H1 (cell line): ENCODE measurements at regions of chr1 and their contacts with region 1.

Region 1: GRCh38 chr1:62286786-62287224 is 32.4 kb downstream of the KANK4 start:
- DNase-seq: peak; percentile 36 to 69
- H3K4me3 ChIP-seq: peak overlapping the region in 3 of 4 experiments; percentile 14 to 40 (median 27); a peak in 6 of 8 replicates
- H3K27ac ChIP-seq: no peak overlapping the region
- H3K4me1 ChIP-seq: peaks cover 10 to 20% (median 15%) of the 10 kb centered on the region in 4 experiments
- H3K27me3 ChIP-seq: peaks cover 12 to 60% (median 45%) of the 10 kb centered on the region in 4 experiments
- CTCF ChIP-seq: no peak
- EP300 ChIP-seq: no peak
- POLR2A ChIP-seq: no peak
- RAD21 ChIP-seq: peak in 1 of 2 experiments; percentile 17; a peak in 1 of 4 replicates

Region 2: DNA sequence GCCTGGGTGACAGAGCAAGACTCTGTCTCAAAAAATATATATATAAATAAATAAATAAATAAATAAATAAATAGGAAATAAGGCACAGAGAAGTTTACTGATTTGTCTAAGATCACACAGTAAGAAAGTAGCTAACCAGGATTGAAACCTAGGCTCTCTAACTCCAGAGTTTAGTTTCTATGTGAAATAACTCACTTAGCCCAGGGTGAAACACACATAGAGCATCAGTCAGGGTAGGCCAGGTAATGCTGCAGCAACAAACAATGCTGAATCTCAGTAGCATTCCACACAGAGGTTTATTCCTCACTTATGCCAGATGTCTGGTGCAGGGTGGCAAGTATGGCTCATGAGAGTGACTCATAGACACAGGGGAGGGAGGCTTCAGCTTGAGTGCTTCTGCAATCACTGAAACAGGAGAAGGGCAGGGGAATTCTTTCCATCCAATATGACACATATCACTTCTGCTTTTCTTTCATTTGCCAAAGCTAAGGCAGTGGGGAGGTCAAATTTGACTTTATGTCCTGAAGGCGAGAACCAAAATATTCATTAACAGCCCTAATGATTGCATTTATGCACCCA is 69.5 kb after region 1 on chr1:
- CTCF ChIA-PET with region 1: no interaction called
- POLR2A ChIA-PET with region 1: no interaction called
- DNase-seq: no peak
- H3K4me3 ChIP-seq: no peak overlapping the region
- H3K27ac ChIP-seq: no peak overlapping the region
- H3K4me1 ChIP-seq: no peaks in the 10 kb centered on the region
- H3K27me3 ChIP-seq: no peaks in the 10 kb centered on the region
- CTCF ChIP-seq: no peak
- EP300 ChIP-seq: no peak
- POLR2A ChIP-seq: no peak
- RAD21 ChIP-seq: no peak

Region 3: DNA sequence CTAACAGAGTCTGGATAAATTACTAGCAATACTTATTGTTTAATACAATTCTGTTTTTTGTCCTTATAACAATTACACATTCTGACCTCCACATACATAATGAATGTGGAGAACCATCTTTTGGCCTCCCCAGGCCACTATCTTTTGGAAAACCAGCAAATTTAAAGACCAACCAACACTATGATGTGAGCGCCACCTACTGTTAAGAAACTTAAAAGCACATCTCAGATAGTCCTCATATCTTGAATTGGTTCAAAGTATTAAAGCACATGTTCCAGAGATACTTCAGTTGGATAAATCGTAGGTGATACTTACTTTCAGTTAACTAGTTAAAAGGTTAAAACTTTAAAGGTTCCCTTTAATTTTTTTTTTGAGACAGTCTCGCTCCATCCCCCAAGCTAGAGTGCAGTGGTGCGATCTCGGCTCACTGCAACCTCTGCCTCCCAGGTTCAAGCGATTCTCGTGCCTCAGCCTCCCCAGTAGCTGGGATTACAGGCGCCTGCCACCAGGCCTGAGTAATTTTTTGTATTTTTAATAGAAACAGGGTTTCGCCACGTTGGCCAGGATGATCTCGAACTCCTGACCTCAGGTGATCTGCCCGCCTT is 120.7 kb after region 1 on chr1:
- CTCF ChIA-PET with region 1: interaction called, 10 read pairs
- POLR2A ChIA-PET with region 1: interaction called, 3 read pairs
- DNase-seq: no peak
- H3K4me3 ChIP-seq: no peak overlapping the region
- H3K27ac ChIP-seq: no peak overlapping the region
- H3K4me1 ChIP-seq: peaks cover 0 to 5% (median 2%) of the 10 kb centered on the region in 4 experiments; a peak in 4 of 7 replicates
- H3K27me3 ChIP-seq: peaks cover 0 to 3% (median 0%) of the 10 kb centered on the region in 4 experiments; a peak in 1 of 7 replicates
- CTCF ChIP-seq: peak in 2 of 3 experiments; percentile 63 to 74; a peak in 3 of 4 replicates
- EP300 ChIP-seq: no peak
- POLR2A ChIP-seq: no peak
- RAD21 ChIP-seq: peak; percentile 91 to 93